ENCODE measurements at regions of chr11 and their contacts with region 1.

Region 1: GRCh38 chr11:67613960-67614715 is 7.4 kb downstream of the NDUFV1 start:
- DNase-seq: peak; percentile 57
- H3K4me3 ChIP-seq: peak overlapping the region in 2 of 3 experiments; percentile 20 to 48
- H3K27ac ChIP-seq: peak overlapping the region; percentile 11
- H3K4me1 ChIP-seq: peaks cover 17% of the 10 kb centered on the region
- H3K27me3 ChIP-seq: no peaks in the 10 kb centered on the region
- CTCF ChIP-seq: peak in 1 of 2 donors; percentile 79

Region 2: GRCh38 chr11:67545280-67545679 is 68.9 kb before region 1 on chr11:
- CTCF ChIA-PET with region 1: no interaction called
- dilution Hi-C with region 1: no loop called
- in situ Hi-C with region 1: no loop called
- intact Hi-C with region 1: no loop called
- DNase-seq: no peak
- H3K4me3 ChIP-seq: no peak overlapping the region
- H3K27ac ChIP-seq: no peak overlapping the region
- H3K4me1 ChIP-seq: no peaks in the 10 kb centered on the region
- H3K27me3 ChIP-seq: no peaks in the 10 kb centered on the region
- CTCF ChIP-seq: no peak

Region 3: GRCh38 chr11:67572747-67573419 is 41.3 kb before region 1 on chr11:
- CTCF ChIA-PET with region 1: interaction called, 3 read pairs
- dilution Hi-C with region 1: no loop called
- in situ Hi-C with region 1: no loop called
- intact Hi-C with region 1: loop called (anchors 2 kb)
- DNase-seq: peak; percentile 50
- H3K4me3 ChIP-seq: no peak overlapping the region
- H3K27ac ChIP-seq: no peak overlapping the region
- H3K4me1 ChIP-seq: no peaks in the 10 kb centered on the region
- H3K27me3 ChIP-seq: no peaks in the 10 kb centered on the region
- CTCF ChIP-seq: peak; percentile 58 to 84